ENCODE measurements at regions of chr17 and their contacts with region 1.

Region 1: DNA sequence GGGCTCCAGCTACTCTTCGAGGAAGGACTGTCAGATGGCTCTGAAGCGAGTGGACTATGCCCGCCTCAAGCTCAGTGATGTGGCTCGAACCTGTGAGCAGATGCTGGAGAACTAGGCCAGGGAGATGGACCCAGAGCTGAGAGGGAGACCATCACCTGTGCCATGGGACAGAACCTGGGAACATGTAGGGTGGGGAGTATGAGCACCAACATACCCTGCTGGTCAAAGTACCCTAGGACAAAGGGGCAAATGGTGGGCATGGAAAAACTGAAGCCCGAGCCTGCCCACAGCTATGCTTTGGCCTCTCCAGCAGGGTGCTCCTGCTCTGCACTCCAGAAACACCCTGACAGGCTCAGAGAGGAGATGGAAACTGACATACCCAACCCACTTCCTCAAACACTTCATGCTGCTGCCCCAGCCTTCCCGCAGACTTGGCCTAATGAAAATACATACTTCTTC is 1.9 kb downstream of the MED11 start:
- DNase-seq: no peak
- H3K4me3 ChIP-seq: no peak overlapping the region
- H3K27ac ChIP-seq: peak overlapping the region; percentile 6
- H3K4me1 ChIP-seq: peaks cover 3% of the 10 kb centered on the region
- H3K27me3 ChIP-seq: no peaks in the 10 kb centered on the region
- CTCF ChIP-seq: no peak

Region 2: GRCh38 chr17:4789901-4790704 is 57.0 kb after region 1 on chr17:
- intact Hi-C with region 1: loop called (anchors 5 kb)
- DNase-seq: peak; percentile 92
- H3K4me3 ChIP-seq: peak overlapping the region; percentile 58
- H3K27ac ChIP-seq: peak overlapping the region; percentile 94
- H3K4me1 ChIP-seq: no peaks in the 10 kb centered on the region
- H3K27me3 ChIP-seq: peaks cover 5% of the 10 kb centered on the region
- CTCF ChIP-seq: peak; percentile 74

Measured in colonic mucosa (tissue), 4 donors.